ENCODE measurements at regions of chr1 and their contacts with region 1.

Region 1: DNA sequence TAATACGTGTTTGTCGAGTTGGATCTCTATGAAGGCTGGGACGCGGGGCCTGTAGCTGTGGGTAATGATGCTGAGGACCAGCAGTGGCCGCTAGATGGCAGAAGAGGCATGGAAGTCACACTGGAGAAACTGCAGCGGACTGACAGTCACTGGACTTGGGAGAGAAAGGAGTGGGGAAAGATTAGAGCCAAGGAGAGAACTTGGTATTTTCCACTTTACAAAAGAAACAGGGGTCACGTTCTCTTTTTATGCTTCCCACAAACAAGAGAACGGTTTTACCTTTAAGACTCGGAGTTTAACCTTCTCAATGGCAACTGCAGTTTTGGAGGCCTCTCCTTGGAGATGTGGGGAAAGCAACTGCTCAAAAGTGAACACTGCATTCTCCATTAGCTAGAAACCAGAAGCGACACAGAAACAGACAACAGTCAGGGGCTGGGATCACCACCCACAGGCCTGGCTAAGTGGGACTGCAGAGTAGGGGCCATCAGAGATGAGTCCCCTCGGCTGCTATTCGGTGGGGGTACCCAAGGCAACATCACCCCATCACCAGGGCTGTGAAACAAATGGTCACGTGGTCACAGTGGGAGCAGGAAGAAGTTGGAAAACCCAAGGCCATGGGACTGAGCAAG is 51.1 kb upstream of the EDEM3 start:
- DNase-seq: peak; percentile 68
- H3K4me3 Mint-ChIP-seq: no peak overlapping the region
- H3K27ac Mint-ChIP-seq: no peak overlapping the region
- H3K4me1 Mint-ChIP-seq: peaks cover 6% of the 10 kb centered on the region
- H3K27me3 Mint-ChIP-seq: no peaks in the 10 kb centered on the region

Region 2: GRCh38 chr1:184747089-184747955 is 58.5 kb before region 1 on chr1:
- intact Hi-C with region 1: no loop called
- DNase-seq: no peak
- H3K4me3 Mint-ChIP-seq: no peak overlapping the region
- H3K27ac Mint-ChIP-seq: no peak overlapping the region
- H3K4me1 Mint-ChIP-seq: peaks cover 34% of the 10 kb centered on the region
- H3K27me3 Mint-ChIP-seq: no peaks in the 10 kb centered on the region

Region 3: DNA sequence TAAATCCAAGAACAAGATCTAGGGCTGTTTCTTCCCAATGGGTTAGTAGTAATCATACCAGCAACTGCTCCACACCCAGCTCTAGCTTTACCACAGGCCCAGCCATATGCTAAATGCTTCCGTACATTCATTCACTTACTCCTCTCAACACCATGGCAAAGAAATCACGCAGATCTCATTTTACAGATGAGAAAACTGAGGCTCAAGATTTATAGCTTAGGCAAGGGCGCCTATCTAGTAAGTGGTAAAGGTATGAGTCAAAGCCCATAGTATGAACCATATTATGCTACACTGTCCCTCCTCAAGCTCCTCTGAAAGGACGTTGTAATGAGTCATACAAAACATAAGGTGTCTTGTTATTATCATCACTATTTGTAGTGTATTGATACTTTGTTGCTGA is 86.3 kb after region 1 on chr1:
- intact Hi-C with region 1: loop called (anchors 2 kb)
- DNase-seq: no peak
- H3K4me3 Mint-ChIP-seq: no peak overlapping the region
- H3K27ac Mint-ChIP-seq: peak overlapping the region; percentile 61
- H3K4me1 Mint-ChIP-seq: peaks cover 39% of the 10 kb centered on the region
- H3K27me3 Mint-ChIP-seq: no peaks in the 10 kb centered on the region

Region 4: DNA sequence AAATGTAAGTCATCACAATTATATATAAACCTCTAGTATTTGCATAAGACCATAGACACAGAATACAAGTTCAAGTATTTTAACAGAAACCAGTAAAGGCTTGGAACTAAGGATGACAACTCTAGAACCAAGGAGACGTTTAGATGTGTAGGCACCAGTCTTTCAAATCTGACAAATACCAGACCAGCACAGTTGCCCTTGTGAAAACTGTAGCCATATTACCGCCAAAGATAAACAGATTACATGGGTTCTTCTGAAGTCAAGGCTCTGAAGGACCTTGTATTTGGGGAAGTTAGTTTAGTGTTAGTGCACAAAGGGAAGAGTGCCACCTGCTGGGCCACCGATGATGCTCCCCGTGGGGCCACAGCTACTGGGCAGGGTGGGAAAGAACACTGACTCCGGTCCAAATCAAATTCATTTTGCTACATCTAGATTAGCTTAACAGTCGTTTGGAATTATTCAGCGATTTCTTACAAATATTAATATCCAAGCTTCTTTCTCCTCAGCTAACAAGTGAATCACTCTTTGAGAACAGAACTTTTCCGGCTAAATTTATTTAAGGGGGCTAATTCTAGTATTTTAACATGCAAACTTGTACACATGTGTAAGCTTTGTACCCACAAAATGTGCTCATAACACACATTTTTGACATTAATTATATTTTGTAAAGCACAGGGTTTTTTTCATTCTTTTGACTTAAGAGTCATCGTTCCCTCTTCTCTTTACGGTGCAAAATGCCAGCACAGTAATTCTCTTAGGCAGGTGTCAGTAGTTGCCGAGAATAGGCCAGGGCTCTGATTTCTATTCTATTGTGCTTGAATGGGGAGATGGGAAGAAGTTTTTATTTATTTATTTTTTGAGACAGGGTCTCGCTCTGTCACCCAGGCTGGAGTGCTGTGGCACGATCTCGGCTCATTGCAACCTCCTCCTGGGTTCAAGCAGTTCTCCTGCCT is 176.5 kb after region 1 on chr1:
- intact Hi-C with region 1: loop called (anchors 1 kb)
- DNase-seq: peak; percentile 59
- H3K4me3 Mint-ChIP-seq: no peak overlapping the region
- H3K27ac Mint-ChIP-seq: no peak overlapping the region
- H3K4me1 Mint-ChIP-seq: peaks cover 10% of the 10 kb centered on the region
- H3K27me3 Mint-ChIP-seq: peaks cover 31% of the 10 kb centered on the region

Region 5: DNA sequence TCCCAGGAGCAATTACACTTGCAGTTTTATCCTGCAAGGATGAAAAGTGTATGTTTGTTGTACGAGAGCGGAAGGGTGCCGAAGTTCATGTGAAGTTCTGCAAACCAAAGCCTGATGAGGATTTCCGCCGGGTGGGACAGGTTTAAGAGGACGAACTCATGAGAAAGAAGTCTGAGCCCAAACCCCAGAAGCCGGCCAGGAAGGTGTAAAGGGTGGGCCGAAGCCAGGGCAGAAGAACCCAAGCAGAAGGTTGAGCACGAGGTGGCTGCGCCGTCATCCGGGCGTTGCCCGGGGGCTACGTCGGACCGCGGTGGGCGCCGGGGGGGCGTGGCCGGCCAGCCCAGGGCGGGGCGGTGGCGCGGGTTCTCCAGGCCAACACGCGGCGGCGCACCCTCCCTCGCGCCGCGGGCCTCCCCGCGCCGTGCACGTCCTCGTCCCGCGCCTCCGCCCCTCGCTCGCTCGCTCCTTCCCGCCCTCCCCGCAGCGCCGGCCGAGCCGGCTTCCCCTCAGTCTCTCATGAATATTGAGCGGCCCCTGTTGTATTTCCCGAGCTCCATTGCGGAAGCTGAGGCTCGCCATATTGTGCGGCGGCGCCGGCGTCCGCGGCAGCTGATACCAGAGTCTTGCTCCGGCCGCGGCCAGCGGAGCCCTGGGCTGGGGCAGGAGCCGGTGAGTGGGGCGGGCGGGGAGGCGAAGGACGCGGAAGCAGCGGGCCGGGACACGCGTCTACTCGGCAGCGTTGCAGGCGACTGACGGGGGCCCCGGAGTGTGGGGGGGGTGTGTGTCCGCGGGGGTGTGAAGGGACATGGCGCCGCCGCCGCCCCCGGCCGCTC is 239.4 kb after region 1 on chr1 and contains the start of gene RNF2:
- intact Hi-C with region 1: loop called (anchors 5 kb)
- DNase-seq: peak; percentile 65
- H3K4me3 Mint-ChIP-seq: peak within 1 kb of the TSS; percentile 89
- H3K27ac Mint-ChIP-seq: peak within 1 kb of the TSS; percentile 82
- H3K4me1 Mint-ChIP-seq: peaks cover 29% of the 10 kb centered on the region
- H3K27me3 Mint-ChIP-seq: peaks cover 15% of the 10 kb centered on the region
- total RNA-seq, gene RNF2: 24.1 and 24.4 TPM in 2 replicates

Region 6: DNA sequence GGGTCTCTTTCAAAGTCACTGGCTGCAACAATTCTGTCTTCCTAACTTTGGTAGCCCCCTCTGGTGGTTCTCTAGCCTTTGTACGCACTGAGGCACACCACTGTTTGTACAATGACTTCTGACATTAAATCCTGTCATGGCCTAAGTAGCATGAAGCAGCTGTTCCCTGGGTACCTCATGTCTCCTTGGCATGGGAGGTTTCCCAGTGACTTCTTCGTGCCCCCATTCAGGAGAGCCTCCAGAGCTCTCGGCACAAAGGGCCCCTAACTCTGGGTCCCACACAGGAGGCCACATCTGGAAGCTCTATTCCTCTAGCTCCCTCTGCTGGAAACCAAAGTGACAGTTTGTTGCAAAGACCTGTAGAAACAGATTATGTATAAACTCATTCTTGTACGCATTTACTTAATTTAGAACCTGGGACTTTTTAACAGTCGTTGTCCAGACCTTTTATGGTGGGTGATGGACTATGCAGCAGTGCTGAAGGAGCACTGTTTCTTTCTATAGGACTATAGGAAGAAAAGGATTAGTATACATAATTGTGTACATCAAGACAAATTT is 364.6 kb after region 1 on chr1:
- intact Hi-C with region 1: loop called (anchors 1 kb)
- DNase-seq: peak; percentile 26
- H3K4me3 Mint-ChIP-seq: no peak overlapping the region
- H3K27ac Mint-ChIP-seq: no peak overlapping the region
- H3K4me1 Mint-ChIP-seq: peaks cover 9% of the 10 kb centered on the region
- H3K27me3 Mint-ChIP-seq: no peaks in the 10 kb centered on the region

Region 7: GRCh38 chr1:185681034-185681633 is 875.4 kb after region 1 on chr1:
- intact Hi-C with region 1: loop called (anchors 5 kb)
- DNase-seq: peak; percentile 20
- H3K4me3 Mint-ChIP-seq: no peak overlapping the region
- H3K27ac Mint-ChIP-seq: no peak overlapping the region
- H3K4me1 Mint-ChIP-seq: peaks cover 21% of the 10 kb centered on the region
- H3K27me3 Mint-ChIP-seq: peaks cover 14% of the 10 kb centered on the region